ENCODE measurements at regions of chr3 and their contacts with region 1.

Region 1: DNA sequence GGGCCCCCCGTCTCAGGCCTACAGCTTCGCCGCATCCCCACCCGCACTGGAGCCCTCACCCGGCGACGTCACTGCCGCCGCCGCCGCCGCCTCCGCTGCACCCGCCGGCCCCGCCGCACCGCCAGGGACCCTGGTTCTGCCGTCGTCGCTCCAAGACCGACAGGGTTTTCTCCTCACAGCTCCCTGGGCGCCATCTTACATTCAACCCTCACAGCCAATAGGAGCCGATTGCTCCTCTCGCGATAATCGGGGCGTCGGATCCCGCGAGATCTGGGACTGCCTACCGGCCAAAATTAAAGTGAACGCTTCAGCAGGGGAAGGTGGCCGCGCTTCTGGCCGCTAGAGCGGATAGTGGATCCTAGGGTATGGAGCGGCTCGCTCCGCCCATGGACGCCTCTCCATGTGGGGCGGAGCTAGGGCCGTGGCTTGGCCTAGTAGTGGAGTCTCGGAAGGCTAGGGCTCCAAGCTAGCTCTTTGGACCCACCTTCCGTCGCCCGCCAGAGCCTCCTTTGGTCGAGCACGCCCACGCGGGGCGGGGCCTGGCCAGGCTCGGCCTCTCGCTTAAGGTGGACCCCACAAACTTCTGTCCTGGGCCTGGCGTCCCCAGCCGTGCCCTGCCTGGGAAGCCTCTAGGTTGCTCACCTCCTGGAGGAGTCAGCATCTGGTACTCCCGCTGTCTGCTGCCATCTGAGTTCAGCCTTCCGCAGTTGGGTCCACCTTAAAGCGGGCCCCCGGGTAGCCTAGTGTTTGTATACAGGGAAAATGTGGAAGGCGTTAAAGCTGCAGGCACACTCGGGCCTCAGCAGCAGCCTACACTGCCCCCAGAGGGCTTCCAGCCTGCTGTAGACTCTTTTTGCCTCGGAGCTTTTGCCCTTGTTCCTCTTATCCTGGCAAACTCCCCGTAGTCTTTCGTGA is at the start of gene QRICH1:
- DNase-seq: peak; percentile 94 to 97
- ATAC-seq: peak; percentile 91 to 93
- H3K4me3 ChIP-seq: peak within 1 kb of the TSS; percentile 77 to 93 (median 83)
- H3K27ac ChIP-seq: peak within 1 kb of the TSS; percentile 85 to 96 (median 90)
- H3K4me1 ChIP-seq: peaks cover 40 to 45% of the 10 kb centered on the region in 2 donors
- H3K27me3 ChIP-seq: no peaks in the 10 kb centered on the region
- CTCF ChIP-seq: peak; percentile 55 to 65 (median 59)
- POLR2A ChIP-seq: peak; percentile 60 to 61
- total RNA-seq, gene QRICH1: 35.8 to 65.6 (median 47.1) TPM

Region 2: GRCh38 chr3:48548729-48549705 is 545.1 kb before region 1 on chr3:
- in situ Hi-C with region 1: no loop called
- intact Hi-C with region 1: no loop called
- DNase-seq: peak; percentile 71 to 82
- ATAC-seq: peak; percentile 93 to 96
- H3K4me3 ChIP-seq: no peak overlapping the region
- H3K27ac ChIP-seq: no peak overlapping the region
- H3K4me1 ChIP-seq: peaks cover 0 to under 1% of the 10 kb centered on the region in 2 donors
- H3K27me3 ChIP-seq: no peaks in the 10 kb centered on the region
- CTCF ChIP-seq: peak; percentile 85 to 96 (median 96)
- POLR2A ChIP-seq: no peak

Region 3: GRCh38 chr3:48989796-48990635 is 104.1 kb before region 1 on chr3 and contains the start of gene P4HTM:
- in situ Hi-C with region 1: no loop called
- intact Hi-C with region 1: loop called (anchors 1 kb)
- DNase-seq: peak; percentile 62 to 80
- ATAC-seq: peak; percentile 82
- H3K4me3 ChIP-seq: peak within 1 kb of the TSS; percentile 79 to 86 (median 84)
- H3K27ac ChIP-seq: peak within 1 kb of the TSS; percentile 79 to 89 (median 86)
- H3K4me1 ChIP-seq: peaks cover 27 to 36% of the 10 kb centered on the region in 2 donors
- H3K27me3 ChIP-seq: no peaks in the 10 kb centered on the region
- CTCF ChIP-seq: peak in 3 of 5 experiments; percentile 30 to 49 (median 42)
- POLR2A ChIP-seq: peak in 1 of 2 donors; percentile 36
- total RNA-seq, gene P4HTM: 13.6 to 21.7 (median 20.3) TPM

Region 4: GRCh38 chr3:49021813-49022687 is 72.1 kb before region 1 on chr3 and contains the start of gene NDUFAF3:
- in situ Hi-C with region 1: no loop called
- intact Hi-C with region 1: loop called (anchors 1 kb)
- DNase-seq: peak; percentile 91 to 95
- ATAC-seq: peak; percentile 76 to 79
- H3K4me3 ChIP-seq: peak within 1 kb of the TSS; percentile 77 to 97 (median 90)
- H3K27ac ChIP-seq: peak within 1 kb of the TSS; percentile 97 to 100 (median 98)
- H3K4me1 ChIP-seq: peaks cover 42 to 51% of the 10 kb centered on the region in 2 donors
- H3K27me3 ChIP-seq: no peaks in the 10 kb centered on the region
- CTCF ChIP-seq: peak; percentile 96 to 99 (median 99)
- POLR2A ChIP-seq: peak in 1 of 2 donors; percentile 87
- total RNA-seq, gene NDUFAF3: 129 to 181 (median 148) TPM

Region 5: DNA sequence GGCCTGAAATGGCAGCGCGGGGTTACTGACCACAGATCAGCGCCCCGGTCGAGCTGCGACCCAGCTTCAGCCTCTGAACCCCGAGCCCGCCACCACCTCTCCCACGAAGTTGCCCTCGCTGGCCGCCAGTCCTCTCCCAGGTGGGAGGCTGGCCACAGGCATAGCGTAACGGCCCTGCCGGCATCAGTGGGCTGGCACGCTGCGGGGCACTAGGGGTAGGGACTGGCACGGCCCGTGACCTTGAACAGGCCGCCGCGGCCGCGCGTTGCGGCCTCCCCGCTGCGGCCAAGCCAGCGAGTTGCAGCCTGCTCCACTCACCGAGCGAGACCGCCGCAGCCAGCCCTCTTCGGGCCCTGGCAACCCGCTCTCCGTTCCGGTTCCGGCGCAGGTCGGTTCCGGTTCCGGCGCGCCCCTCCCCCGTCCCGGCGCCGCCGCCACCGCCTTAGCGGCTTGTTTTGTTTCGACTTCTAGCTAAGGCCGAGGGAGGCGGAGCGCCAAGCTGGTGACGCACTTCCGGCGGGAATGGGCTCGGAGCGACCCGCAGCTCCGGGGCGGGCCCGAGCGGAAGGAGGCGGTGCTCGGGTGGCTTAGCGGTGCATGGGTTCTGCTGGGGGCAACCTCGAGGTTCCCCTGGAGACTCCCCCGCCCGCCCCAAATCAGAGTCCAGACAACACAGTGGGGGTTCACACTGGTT is 26.5 kb after region 1 on chr3 and contains the start of gene USP19:
- in situ Hi-C with region 1: no loop called
- intact Hi-C with region 1: loop called (anchors 1 kb)
- DNase-seq: peak; percentile 93 to 97
- ATAC-seq: peak; percentile 91 to 93
- H3K4me3 ChIP-seq: peak within 1 kb of the TSS; percentile 77 to 100 (median 96)
- H3K27ac ChIP-seq: peak within 1 kb of the TSS; percentile 83 to 99 (median 95)
- H3K4me1 ChIP-seq: peaks cover 16 to 17% of the 10 kb centered on the region in 2 donors
- H3K27me3 ChIP-seq: no peaks in the 10 kb centered on the region
- CTCF ChIP-seq: no peak
- POLR2A ChIP-seq: peak; percentile 86 to 90
- total RNA-seq, gene USP19: 100 to 188 (median 128) TPM

Region 6: GRCh38 chr3:49153349-49153912 is 59.3 kb after region 1 on chr3:
- in situ Hi-C with region 1: no loop called
- intact Hi-C with region 1: no loop called
- DNase-seq: no peak
- ATAC-seq: no peak
- H3K4me3 ChIP-seq: no peak overlapping the region
- H3K27ac ChIP-seq: no peak overlapping the region
- H3K4me1 ChIP-seq: no peaks in the 10 kb centered on the region
- H3K27me3 ChIP-seq: no peaks in the 10 kb centered on the region
- CTCF ChIP-seq: no peak
- POLR2A ChIP-seq: no peak

Region 7: GRCh38 chr3:49165771-49166751 is 72.0 kb after region 1 on chr3 and contains the start of gene CCDC71:
- in situ Hi-C with region 1: no loop called
- intact Hi-C with region 1: loop called (anchors 5 kb)
- DNase-seq: peak in 1 of 2 donors; percentile 69
- ATAC-seq: peak; percentile 65 to 68
- H3K4me3 ChIP-seq: peak within 1 kb of the TSS; percentile 64 to 88 (median 81)
- H3K27ac ChIP-seq: peak within 1 kb of the TSS; percentile 80 to 92 (median 86)
- H3K4me1 ChIP-seq: peaks cover 23 to 33% of the 10 kb centered on the region in 2 donors
- H3K27me3 ChIP-seq: no peaks in the 10 kb centered on the region
- CTCF ChIP-seq: no peak
- POLR2A ChIP-seq: peak; percentile 54 to 81
- total RNA-seq, gene CCDC71: 20.0 to 31.0 (median 22.0) TPM

Region 8: GRCh38 chr3:49266410-49267095 is 172.4 kb after region 1 on chr3:
- in situ Hi-C with region 1: no loop called
- intact Hi-C with region 1: no loop called
- DNase-seq: no peak
- ATAC-seq: no peak
- H3K4me3 ChIP-seq: no peak overlapping the region
- H3K27ac ChIP-seq: no peak overlapping the region
- H3K4me1 ChIP-seq: no peaks in the 10 kb centered on the region
- H3K27me3 ChIP-seq: no peaks in the 10 kb centered on the region
- CTCF ChIP-seq: no peak
- POLR2A ChIP-seq: no peak

Region 9: DNA sequence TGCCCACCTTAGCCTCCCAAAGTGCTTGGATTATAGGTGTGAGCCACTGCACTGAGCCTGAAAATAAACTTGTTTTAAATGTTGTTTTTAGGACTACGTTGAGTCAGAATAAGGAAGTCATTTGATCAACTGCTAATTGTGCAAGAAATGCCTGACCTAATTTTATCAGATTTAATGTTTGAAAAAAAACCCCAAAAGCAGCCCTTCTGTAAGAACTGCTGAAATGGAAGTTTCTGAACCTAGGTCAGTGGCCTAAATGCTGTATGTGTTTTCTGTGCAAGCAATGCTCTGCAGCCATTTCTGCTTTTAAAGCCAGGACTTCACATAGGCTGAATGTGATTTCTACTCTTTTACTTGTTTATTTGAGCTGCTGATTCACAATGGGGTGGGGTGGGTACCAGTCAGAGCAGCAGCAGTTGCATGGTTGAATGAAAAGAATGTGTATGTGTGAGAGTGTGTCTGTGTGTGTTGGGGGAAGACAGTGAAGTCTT is 257.5 kb after region 1 on chr3:
- in situ Hi-C with region 1: no loop called
- intact Hi-C with region 1: no loop called
- DNase-seq: no peak
- ATAC-seq: peak; percentile 23 to 39
- H3K4me3 ChIP-seq: no peak overlapping the region
- H3K27ac ChIP-seq: peak overlapping the region; percentile 37 to 55 (median 46)
- H3K4me1 ChIP-seq: peaks cover 6 to 16% of the 10 kb centered on the region in 2 donors
- H3K27me3 ChIP-seq: no peaks in the 10 kb centered on the region
- CTCF ChIP-seq: no peak
- POLR2A ChIP-seq: no peak

Region 10: GRCh38 chr3:49673715-49674496 is 579.8 kb after region 1 on chr3 and contains the start of gene APEH:
- in situ Hi-C with region 1: no loop called
- intact Hi-C with region 1: loop called (anchors 5 kb)
- DNase-seq: peak; percentile 93 to 98
- ATAC-seq: peak; percentile 86 to 88
- H3K4me3 ChIP-seq: peak within 1 kb of the TSS; percentile 80 to 98 (median 92)
- H3K27ac ChIP-seq: peak within 1 kb of the TSS; percentile 91 to 96 (median 94)
- H3K4me1 ChIP-seq: peaks cover 16 to 17% of the 10 kb centered on the region in 2 donors
- H3K27me3 ChIP-seq: no peaks in the 10 kb centered on the region
- CTCF ChIP-seq: peak in 1 of 5 experiments; percentile 10
- POLR2A ChIP-seq: peak; percentile 75 to 82
- total RNA-seq, gene APEH: 103 to 140 (median 108) TPM

Measured in gastrocnemius medialis (tissue), 4 donors.